HEK293 (cell line): ENCODE measurements at regions of chr18 and their contacts with region 1.

Region 1: DNA sequence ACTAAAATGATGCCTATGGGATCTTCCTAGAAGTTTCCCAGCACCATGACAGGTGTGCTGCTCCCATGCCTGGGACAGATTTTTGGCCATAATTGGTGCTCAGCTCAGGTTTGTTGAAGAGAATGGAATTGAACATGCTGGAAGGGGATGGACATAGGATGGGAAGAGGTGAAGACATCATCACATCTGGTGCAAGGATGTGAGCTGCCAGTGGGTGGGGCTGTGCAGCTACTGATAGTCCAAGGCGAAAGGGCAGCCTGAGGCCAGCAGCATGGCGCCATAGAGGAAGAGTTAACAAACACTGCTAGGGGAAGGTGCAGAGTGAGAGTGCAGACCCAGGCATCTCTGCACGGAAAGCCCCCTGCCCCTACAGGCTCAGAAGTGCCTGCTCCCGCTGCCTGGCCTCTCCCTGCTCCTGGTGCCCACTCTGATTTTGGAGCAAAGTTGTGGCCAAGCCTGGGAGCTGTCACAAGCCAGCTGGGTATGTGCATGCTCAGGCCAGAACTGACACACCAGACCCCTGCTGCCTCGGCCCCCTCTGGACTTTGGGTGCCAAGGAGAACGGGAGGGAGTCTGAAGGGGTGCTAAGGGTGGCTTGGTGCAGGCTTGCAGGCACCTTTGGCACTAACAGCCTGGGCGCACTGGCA is 178.6 kb downstream of the ZBTB7C start:
- H3K4me3 ChIP-seq: no peak overlapping the region
- H3K27ac ChIP-seq: no peak overlapping the region
- H3K4me1 ChIP-seq: peaks cover 9% of the 10 kb centered on the region
- CTCF ChIP-seq: peak; percentile 81

Region 2: DNA sequence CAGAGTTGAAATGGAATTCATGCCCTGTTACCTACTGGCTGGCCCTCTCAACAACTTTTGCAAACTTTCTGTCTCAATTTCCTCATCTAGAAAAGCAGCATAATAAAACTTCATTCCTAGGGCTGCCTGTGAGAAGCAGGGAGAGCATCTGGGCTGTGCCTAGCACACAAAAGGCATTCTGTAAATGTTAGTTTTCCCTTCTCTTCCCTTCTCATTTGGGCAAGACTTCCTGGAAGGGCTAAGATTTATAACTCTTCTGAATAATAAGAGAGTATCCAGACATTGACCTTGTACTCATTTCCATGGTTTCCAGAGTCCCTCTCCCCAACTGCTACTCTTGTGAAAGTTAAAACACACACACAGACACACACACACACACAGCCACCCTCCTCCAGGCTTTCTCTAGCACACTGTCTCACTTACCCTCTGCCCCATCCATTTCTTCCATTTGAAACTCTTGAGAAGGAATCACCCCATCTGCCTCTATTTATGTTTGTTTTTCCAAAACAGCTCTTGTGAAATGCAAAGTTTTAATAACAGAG is 602.3 kb before region 1 on chr18:
- CTCF ChIA-PET with region 1: no interaction called
- POLR2A ChIA-PET with region 1: no interaction called
- H3K4me3 ChIP-seq: no peak overlapping the region
- H3K27ac ChIP-seq: no peak overlapping the region
- H3K4me1 ChIP-seq: no peaks in the 10 kb centered on the region
- CTCF ChIP-seq: no peak

Region 3: GRCh38 chr18:47815486-47816280 is 414.9 kb before region 1 on chr18:
- CTCF ChIA-PET with region 1: no interaction called
- POLR2A ChIA-PET with region 1: no interaction called
- H3K4me3 ChIP-seq: no peak overlapping the region
- H3K27ac ChIP-seq: no peak overlapping the region
- H3K4me1 ChIP-seq: no peaks in the 10 kb centered on the region
- CTCF ChIP-seq: no peak

Region 4: DNA sequence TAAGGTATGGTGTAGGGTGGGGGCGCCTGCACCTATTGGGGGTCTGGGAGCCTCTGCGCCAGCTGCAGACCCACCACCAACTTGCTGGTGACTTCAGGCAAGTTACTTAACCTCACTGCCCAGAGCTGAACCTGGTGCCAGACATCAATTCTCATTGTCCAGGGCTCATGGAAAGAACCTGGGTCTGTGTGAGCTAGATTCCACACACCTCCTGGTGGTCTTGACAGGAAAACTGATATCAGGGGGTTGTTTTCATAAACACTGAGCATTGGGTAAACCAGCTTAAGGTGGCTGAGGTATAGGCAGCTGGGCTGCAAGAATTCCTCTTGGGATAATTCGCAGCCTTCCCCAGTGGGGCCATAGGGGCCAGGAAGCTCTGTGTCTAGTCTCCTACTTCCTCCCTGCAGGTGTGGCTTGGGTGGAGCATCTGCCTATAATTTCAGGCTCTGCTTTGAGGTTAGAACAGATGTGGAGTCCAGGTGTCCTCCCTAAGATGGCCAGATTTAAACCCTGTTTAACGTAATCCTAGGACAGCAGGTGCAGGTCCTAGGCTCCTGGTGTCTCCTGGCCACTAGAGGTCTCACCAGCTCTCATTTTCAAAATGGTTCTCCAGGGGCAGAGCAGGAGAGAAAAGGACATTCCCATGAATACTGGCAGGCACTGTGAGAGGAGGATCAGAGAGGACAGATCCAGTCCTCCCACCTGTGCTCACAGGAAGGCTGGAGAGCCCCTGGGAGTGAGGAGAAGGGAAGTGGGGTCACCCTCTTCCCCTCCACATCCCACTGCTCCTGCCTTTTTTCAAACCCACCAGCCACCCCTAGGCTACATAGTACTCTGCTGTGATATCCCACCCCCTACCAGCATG is 199.7 kb before region 1 on chr18:
- CTCF ChIA-PET with region 1: interaction called, 41 read pairs
- POLR2A ChIA-PET with region 1: no interaction called
- H3K4me3 ChIP-seq: no peak overlapping the region
- H3K27ac ChIP-seq: no peak overlapping the region
- H3K4me1 ChIP-seq: peaks cover 3% of the 10 kb centered on the region; the same call in 1 of the 2 replicates
- CTCF ChIP-seq: peak; percentile 83

Region 5: DNA sequence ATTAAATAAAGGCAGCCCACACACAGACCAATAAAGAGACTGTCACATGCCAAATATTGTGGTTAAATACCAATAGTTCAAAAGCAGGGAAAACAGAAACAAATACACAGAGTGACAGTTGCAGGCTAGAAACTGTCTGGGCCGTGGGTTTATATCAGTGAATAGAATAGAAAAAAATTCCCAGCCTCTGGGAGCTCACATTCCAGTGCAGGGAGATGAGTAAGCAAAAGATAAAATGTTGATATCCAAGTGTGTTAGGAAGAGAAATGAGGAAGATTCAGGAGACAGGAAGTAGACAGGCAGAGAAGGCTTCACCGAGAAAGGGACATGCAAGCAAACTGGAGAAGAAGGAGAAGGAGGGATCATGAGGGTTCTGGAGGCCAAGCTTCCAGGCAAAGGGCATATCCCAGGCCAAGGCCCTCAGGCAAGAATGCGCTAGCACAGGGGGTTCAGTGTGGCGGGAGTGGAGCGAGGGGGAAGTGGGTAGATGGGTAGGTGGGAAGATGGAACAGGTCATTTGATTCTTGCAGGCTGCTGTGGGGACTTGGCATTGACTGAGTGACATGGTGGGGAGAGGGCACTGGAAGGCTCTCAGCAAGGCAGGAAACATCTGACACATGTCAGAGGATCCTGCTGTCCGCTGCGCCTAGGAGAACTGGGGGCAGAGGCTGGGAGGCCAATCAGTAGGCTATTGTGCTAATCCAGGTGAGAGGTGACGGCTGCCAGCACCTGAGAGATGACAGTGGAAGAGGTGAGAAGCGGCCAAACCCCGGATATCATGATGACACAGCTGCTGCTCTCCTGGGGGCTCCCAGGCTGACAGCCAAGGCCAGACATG is 89.4 kb after region 1 on chr18:
- CTCF ChIA-PET with region 1: no interaction called
- POLR2A ChIA-PET with region 1: no interaction called
- H3K4me3 ChIP-seq: no peak overlapping the region
- H3K27ac ChIP-seq: no peak overlapping the region
- H3K4me1 ChIP-seq: no peaks in the 10 kb centered on the region
- CTCF ChIP-seq: no peak

Region 6: GRCh38 chr18:48410095-48410920 is 179.7 kb after region 1 on chr18:
- CTCF ChIA-PET with region 1: interaction called, 10 read pairs
- POLR2A ChIA-PET with region 1: no interaction called
- H3K4me3 ChIP-seq: peak overlapping the region; percentile 51
- H3K27ac ChIP-seq: peak overlapping the region; percentile 68; the same call in 1 of the 2 replicates
- H3K4me1 ChIP-seq: peaks cover 5% of the 10 kb centered on the region
- CTCF ChIP-seq: no peak

Region 7: GRCh38 chr18:48460929-48461583 is 230.5 kb after region 1 on chr18:
- CTCF ChIA-PET with region 1: interaction called, 18 read pairs
- POLR2A ChIA-PET with region 1: no interaction called
- H3K4me3 ChIP-seq: no peak overlapping the region
- H3K27ac ChIP-seq: no peak overlapping the region
- H3K4me1 ChIP-seq: no peaks in the 10 kb centered on the region
- CTCF ChIP-seq: no peak